ENCODE measurements at regions of chr19 and their contacts with region 1.

Region 1: GRCh38 chr19:16957151-16957701 is 68.4 kb downstream of the F2RL3 start:
- DNase-seq: no peak
- ATAC-seq: no peak
- H3K4me3 Mint-ChIP-seq: no peak overlapping the region
- H3K27ac Mint-ChIP-seq: no peak overlapping the region
- H3K4me1 Mint-ChIP-seq: no peaks in the 10 kb centered on the region
- H3K27me3 Mint-ChIP-seq: peaks cover 28% of the 10 kb centered on the region

Region 2: DNA sequence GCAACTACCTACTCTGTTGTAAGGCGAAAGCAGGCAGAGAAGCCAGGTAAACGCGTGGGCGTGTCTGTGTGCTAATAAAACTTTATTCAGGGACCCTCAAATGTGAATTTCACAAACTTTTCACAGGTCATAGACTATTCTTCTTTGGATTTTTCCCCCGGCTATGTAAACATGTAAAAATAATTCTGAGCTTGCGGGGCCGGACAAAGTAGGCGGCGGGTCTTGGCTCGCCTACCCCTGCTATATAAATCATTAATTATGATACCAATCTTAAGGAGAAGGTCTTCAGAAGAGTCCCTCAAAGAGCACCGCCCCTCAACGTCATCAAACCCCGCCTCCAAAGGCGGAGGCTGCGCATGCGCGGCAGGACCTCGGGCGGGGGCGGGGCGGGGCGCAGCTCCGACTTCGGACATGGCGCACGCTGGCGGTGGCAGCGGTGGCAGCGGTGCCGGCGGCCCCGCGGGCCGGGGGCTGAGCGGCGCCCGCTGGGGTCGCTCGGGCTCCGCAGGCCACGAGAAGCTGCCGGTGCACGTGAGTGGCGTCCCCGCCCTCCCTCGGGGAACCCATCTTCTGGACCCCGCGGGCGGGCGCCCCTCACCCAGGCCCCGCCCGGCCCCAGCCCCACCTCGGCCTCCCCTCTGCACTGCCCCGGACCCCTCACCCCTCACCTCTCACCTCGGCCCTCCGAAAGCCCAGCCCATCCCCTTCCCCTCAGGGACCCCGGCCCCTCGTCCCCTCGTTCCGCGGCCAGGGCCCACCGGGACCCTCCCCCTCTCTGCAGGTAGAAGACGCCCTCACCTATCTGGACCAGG is 128.0 kb before region 1 on chr19 and contains the start of gene SIN3B:
- CTCF ChIA-PET with region 1: no interaction called
- POLR2A ChIA-PET with region 1: interaction called, 17 read pairs
- intact Hi-C with region 1: no loop called
- DNase-seq: peak; percentile 93
- ATAC-seq: peak; percentile 91
- H3K4me3 Mint-ChIP-seq: peak within 1 kb of the TSS; percentile 79
- H3K27ac Mint-ChIP-seq: peak within 1 kb of the TSS; percentile 82
- H3K4me1 Mint-ChIP-seq: peaks cover 38% of the 10 kb centered on the region
- H3K27me3 Mint-ChIP-seq: peaks cover 20% of the 10 kb centered on the region
- total RNA-seq, gene SIN3B: 27.6 to 28.5 TPM

Measured in activated CD4-positive, alpha-beta T cell treated with anti-CD3 and anti-CD28 coated beads for 36 hours (primary cell).